ENCODE measurements at regions of chr12 and their contacts with region 1.

Region 1: DNA sequence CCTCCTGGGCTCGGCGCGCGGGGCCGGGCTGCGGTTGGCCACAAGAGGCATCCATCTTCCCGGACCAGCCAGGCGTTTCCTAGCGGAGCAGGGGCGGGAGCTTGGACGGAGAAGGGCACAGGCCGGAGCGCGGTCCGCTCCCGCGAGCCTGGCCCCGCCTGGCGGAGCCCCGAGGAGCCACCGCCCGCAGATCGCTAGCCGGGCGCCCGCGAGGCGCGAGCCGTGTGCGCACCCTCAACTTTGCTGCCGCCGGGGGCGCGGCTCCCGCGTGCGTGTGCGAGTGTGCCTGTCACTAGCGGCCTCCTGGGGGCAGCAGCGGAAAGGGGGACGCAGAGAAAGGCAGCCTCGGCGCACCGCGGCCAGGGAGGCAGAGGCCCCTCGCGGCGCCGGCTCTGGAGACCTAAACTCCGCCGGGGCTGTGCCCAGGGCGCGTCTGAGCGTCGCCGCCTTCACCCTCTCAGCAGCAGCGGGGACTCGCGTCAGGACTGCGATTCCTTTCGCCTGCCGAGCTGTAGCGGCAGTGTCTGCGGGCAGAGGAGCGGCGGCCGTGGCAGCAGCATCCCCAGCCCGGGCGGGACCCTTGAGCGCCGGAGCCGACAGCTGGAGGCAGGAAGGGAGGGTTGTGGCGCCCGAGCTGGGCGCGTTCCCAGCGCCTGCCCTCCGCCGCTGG is 644 bp upstream of the SRGAP1 start:
- DNase-seq: peak; percentile 84 to 87 (median 84)
- H3K4me3 ChIP-seq: peak overlapping the region; percentile 65 to 92 (median 89)
- H3K4me3 Mint-ChIP-seq: peak overlapping the region; percentile 79 to 89
- H3K27ac ChIP-seq: peak overlapping the region in 1 of 2 donors; percentile 61
- H3K27ac Mint-ChIP-seq: peak overlapping the region in 4 of 7 donors; percentile 33 to 50 (median 49)
- H3K4me1 ChIP-seq: peaks cover 11 to 17% of the 10 kb centered on the region in 2 donors
- H3K4me1 Mint-ChIP-seq: peaks cover 15% of the 10 kb centered on the region
- H3K27me3 ChIP-seq: peaks cover 8 to 15% of the 10 kb centered on the region in 2 donors
- H3K27me3 Mint-ChIP-seq: peaks cover 23 to 27% (median 25%) of the 10 kb centered on the region in 3 donors
- CTCF ChIP-seq: peak; percentile 97

Region 2: DNA sequence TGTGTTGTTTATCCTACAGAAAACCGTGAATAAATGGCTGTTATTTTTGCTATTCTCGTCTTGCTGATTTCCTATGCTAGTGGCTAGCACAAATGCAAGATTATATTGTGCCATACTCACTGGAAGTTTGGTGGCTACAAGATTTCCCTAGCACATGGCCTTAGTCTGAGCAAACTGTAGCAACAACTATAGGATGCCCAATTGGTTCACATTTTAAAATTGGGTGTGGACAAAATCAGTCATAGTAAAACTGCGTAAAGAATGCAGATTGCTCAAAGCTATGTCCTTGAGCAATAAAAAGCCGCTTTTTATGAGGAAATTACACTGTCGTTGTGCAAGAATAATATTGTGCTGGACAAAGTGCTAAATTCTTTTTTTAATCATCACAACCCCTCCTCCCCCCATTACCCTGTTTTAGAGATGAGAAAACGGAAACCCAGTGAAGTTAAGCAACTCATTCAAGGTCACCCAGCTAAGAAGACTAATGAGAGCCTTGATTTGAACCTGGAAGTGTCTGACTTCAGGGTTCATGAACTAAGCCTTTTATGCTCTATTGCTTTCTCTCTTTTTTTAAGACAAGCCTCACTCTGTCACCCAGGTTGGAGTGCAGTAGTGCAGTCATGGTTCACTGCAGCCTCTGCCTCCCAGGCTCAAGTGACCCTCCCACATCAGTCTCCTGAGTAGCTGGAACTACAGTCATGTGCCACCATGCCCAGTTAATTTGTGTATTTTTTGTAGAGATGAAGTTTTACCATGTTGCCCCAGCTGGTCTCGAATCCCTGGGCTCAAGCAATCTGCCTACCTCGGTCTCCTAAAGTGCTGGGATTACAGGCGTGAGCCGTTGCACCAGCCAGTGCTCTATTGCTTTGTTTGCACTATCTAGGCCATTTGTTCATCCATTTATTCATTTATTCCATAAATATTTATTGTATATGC is 74.3 kb after region 1 on chr12:
- intact Hi-C with region 1: loop called in 1 of 2 experiments (anchors 10 kb)
- DNase-seq: peak; percentile 95 to 100 (median 97)
- H3K4me3 ChIP-seq: peak overlapping the region in 1 of 3 experiments; percentile 35
- H3K4me3 Mint-ChIP-seq: peak overlapping the region; percentile 64 to 82
- H3K27ac ChIP-seq: peak overlapping the region; percentile 58 to 84
- H3K27ac Mint-ChIP-seq: peak overlapping the region; percentile 92 to 99 (median 98)
- H3K4me1 ChIP-seq: peaks cover 31 to 36% of the 10 kb centered on the region in 2 donors
- H3K4me1 Mint-ChIP-seq: peaks cover 40% of the 10 kb centered on the region
- H3K27me3 ChIP-seq: no peaks in the 10 kb centered on the region
- H3K27me3 Mint-ChIP-seq: peaks cover 0 to 6% (median under 1%) of the 10 kb centered on the region in 3 donors
- CTCF ChIP-seq: no peak

Region 3: GRCh38 chr12:63955831-63956609 is 112.2 kb after region 1 on chr12:
- intact Hi-C with region 1: loop called in 1 of 2 experiments (anchors 10 kb)
- DNase-seq: peak; percentile 94 to 99 (median 99)
- H3K4me3 ChIP-seq: peak overlapping the region in 1 of 3 experiments; percentile 35
- H3K4me3 Mint-ChIP-seq: peak overlapping the region; percentile 37 to 62
- H3K27ac ChIP-seq: peak overlapping the region; percentile 19 to 64
- H3K27ac Mint-ChIP-seq: peak overlapping the region; percentile 82 to 91 (median 88)
- H3K4me1 ChIP-seq: peaks cover 20 to 21% of the 10 kb centered on the region in 2 donors
- H3K4me1 Mint-ChIP-seq: peaks cover 24% of the 10 kb centered on the region
- H3K27me3 ChIP-seq: no peaks in the 10 kb centered on the region
- H3K27me3 Mint-ChIP-seq: peaks cover 0 to 4% (median 0%) of the 10 kb centered on the region in 3 donors
- CTCF ChIP-seq: no peak

Region 4: DNA sequence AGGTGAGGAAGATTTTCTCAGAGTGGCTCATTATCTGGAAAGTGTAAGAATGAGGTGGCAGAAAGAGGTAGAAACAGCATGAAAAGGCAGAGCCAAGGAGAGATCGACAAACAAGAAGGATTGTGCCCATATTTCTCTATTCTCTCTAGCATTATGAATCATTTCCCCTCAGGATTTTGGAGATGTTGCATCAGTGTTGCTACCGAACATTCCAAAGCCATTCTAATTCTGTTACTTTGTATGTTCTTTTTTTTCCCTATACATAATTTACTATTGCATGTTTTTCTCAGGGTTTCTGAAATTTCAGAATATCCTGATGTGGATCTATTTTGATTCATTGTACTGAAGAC is 316.8 kb after region 1 on chr12:
- intact Hi-C with region 1: no loop called
- DNase-seq: no peak
- H3K4me3 ChIP-seq: no peak overlapping the region
- H3K4me3 Mint-ChIP-seq: no peak overlapping the region
- H3K27ac ChIP-seq: no peak overlapping the region
- H3K27ac Mint-ChIP-seq: no peak overlapping the region
- H3K4me1 ChIP-seq: no peaks in the 10 kb centered on the region
- H3K4me1 Mint-ChIP-seq: peaks cover 3% of the 10 kb centered on the region
- H3K27me3 ChIP-seq: no peaks in the 10 kb centered on the region
- H3K27me3 Mint-ChIP-seq: peaks cover 0 to 4% (median 1%) of the 10 kb centered on the region in 3 donors
- CTCF ChIP-seq: no peak

Region 5: GRCh38 chr12:64256166-64256800 is 412.4 kb after region 1 on chr12:
- intact Hi-C with region 1: loop called (anchors 2 kb)
- DNase-seq: peak; percentile 29 to 62 (median 44)
- H3K4me3 ChIP-seq: no peak overlapping the region
- H3K4me3 Mint-ChIP-seq: no peak overlapping the region
- H3K27ac ChIP-seq: no peak overlapping the region
- H3K27ac Mint-ChIP-seq: no peak overlapping the region
- H3K4me1 ChIP-seq: peaks cover 0 to 2% of the 10 kb centered on the region in 2 donors
- H3K4me1 Mint-ChIP-seq: peaks cover 13% of the 10 kb centered on the region
- H3K27me3 ChIP-seq: no peaks in the 10 kb centered on the region
- H3K27me3 Mint-ChIP-seq: no peaks in the 10 kb centered on the region
- CTCF ChIP-seq: peak; percentile 82

Region 6: GRCh38 chr12:64403707-64404469 is 560.0 kb after region 1 on chr12 and contains the start of gene XPOT:
- intact Hi-C with region 1: loop called in 1 of 2 experiments (anchors 10 kb)
- DNase-seq: peak; percentile 93 to 95 (median 95)
- H3K4me3 ChIP-seq: peak within 1 kb of the TSS; percentile 90 to 97 (median 97)
- H3K4me3 Mint-ChIP-seq: peak within 1 kb of the TSS; percentile 95 to 97
- H3K27ac ChIP-seq: peak within 1 kb of the TSS; percentile 93 to 97
- H3K27ac Mint-ChIP-seq: peak within 1 kb of the TSS; percentile 90 to 98 (median 96)
- H3K4me1 ChIP-seq: peaks cover 13 to 18% of the 10 kb centered on the region in 2 donors
- H3K4me1 Mint-ChIP-seq: peaks cover 15% of the 10 kb centered on the region
- H3K27me3 ChIP-seq: no peaks in the 10 kb centered on the region
- H3K27me3 Mint-ChIP-seq: peaks cover 2 to 9% (median 6%) of the 10 kb centered on the region in 3 donors
- CTCF ChIP-seq: no peak
- polyA plus RNA-seq, gene XPOT: 18.3 to 19.9 (median 19.3) TPM

Measured in CD14-positive monocyte (primary cell).